KBM-7 (cell line): ENCODE measurements at regions of chr3 and their contacts with region 1.

Region 1: GRCh38 chr3:33131331-33132018 is 17.7 kb downstream of the CRTAP start:
- DNase-seq: peak; percentile 77

Region 2: GRCh38 chr3:32570421-32571191 is 560.9 kb before region 1 on chr3 and contains the start of gene DYNC1LI1:
- in situ Hi-C with region 1: no loop called
- DNase-seq: peak; percentile 88

Region 3: DNA sequence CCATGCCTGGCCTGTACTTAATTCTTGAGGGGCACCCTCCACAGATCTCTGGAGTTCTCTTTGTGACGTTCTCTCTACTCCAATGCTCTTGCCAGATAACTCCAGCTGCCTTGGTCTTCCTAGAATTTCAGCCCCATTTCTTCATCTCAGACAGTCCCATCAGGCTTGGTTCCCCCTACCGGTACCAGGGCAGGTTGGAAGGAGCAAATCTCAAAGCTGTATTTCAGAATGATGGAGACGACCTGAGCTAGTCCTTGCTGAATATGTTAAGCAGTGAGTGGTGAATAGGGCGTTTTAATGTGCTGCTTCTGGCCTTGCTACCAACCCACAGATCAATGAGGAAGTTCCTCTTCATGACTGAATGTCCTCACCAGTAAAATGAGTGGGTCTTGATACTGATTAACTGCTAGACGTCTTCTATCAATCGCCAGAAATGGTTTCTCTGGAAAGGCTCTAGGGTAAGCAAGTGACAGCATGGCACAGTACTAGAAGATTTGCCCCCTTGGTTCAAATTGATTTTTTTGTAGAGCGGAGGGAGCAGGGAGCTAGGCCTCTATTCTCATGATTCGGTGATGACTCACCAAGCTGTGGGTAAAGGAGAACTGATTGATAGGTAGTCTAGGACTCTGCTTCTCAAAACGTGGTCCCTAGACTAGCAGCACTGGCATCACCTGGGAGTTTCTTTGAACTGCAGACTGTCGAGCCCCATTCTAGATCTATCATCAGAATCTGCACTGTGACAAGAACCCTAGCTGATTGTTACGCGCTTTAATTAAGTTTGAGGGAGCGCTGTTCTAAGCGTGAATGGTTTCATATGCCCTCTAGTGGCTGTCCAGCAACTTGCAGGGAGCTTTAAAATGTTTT is 241.0 kb after region 1 on chr3:
- in situ Hi-C with region 1: loop called (anchors 10 kb)
- DNase-seq: peak; percentile 79

Region 4: DNA sequence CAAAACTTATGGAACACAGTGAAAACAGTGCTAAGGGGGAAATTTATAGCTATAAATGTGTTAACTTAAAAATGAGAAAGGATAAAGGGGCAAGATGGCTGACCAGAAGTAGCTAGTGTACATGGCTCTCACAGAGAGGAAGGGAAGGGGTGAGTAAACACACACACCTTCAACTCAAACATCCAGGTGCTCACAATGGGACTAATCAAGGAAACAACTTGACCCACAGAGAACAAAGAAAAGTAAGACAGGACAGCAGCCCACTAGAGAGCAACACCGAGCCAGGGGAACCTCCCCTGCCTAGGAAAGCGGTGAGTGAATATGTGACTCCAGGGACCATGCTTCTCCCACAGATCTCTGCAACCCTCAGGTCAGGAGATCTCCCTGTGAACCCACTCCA is 393.8 kb after region 1 on chr3:
- in situ Hi-C with region 1: no loop called
- DNase-seq: no peak